Activated CD4-positive, alpha-beta memory T cell treated with anti-CD3 and anti-CD28 coated beads for 36 hours (primary cell): ENCODE measurements at regions of chr1 and their contacts with region 1.

Region 1: DNA sequence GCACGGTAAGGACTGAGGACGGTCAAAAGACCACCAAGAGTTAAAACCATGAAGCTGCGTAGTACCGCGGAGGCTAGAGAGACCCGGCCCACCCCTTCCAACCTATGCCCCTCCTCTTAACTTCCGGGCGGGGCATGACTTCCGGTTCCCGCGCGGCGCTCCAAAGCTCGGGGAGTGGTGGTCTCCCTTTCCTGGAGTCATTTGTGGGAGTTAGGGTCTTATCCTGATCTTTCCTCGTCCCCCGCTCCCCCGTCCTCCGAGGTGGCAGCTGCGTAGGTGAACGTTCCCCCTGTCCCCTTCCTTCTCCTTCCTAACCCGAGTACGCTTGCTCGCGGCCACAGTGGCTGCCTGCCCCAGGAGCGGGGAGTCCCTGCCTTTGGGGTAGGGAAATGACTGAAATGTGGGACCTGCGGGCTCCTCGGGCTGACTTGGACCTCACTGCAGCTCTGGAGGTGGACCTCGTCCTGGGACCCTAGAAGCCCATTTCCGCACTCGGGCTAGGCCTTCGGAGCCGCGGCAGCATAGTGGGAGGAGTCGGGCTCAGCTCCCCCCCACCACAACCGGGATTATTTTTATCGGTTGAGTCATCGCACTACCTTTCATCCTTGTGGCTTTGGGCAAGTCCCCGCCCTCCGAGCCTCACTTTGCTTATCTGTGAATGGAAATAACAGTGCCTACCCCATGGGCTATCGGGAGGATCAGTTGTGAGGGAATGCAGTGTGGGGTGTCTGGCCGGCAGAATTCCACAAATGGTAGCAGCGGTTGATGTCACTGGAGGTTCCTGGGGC is 24.1 kb downstream of the CELA3A start:
- DNase-seq: peak; percentile 92
- H3K4me3 Mint-ChIP-seq: peak overlapping the region; percentile 95
- H3K27ac Mint-ChIP-seq: peak overlapping the region; percentile 99
- H3K4me1 Mint-ChIP-seq: peaks cover 43% of the 10 kb centered on the region
- H3K27me3 Mint-ChIP-seq: no peaks in the 10 kb centered on the region

Region 2: DNA sequence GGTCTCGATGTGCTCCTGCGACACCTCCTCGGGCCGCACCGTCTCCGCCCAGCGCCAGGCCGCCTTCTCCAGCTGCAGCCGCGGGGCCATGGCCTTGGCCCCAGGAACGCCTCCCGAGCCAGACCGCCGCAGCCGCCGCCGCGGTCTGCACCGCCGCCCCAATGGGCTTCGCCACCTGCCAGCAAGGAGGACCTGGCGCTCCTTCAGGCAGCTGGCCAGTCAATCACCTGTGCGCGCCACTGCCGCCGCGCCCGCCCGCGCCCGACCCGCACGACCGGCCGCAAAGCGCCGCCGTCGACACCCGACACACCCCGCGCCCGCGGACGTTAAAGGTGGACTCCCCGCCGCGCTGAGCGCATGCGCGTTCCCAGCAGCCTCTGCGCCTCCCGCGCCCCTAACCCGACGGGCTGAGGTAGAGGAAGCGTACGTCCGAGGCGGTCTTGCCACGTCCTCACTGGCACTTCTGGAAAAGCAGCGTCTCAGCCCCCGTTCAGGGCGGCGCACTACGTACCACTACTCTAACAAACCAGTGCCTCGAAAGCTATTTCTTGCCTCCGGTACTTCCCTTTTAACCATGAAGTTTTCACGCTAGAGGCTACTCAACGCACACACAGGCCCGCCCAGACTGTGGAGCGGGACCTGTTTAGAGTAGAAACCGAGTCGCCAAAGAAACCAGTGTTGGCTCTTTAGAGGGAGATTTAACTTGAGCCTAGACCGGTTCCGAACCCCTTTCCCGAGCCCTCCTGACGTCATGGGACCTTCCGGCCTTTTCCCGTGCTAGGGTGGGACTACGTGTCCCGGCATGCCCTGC is 242.5 kb before region 1 on chr1 and contains the start of gene USP48:
- CTCF ChIA-PET with region 1: interaction called, 8 read pairs
- POLR2A ChIA-PET with region 1: interaction called, 23 read pairs
- intact Hi-C with region 1: loop called (anchors 1 kb)
- DNase-seq: peak; percentile 98
- H3K4me3 Mint-ChIP-seq: peak within 1 kb of the TSS; percentile 94
- H3K27ac Mint-ChIP-seq: peak within 1 kb of the TSS; percentile 97
- H3K4me1 Mint-ChIP-seq: peaks cover 21% of the 10 kb centered on the region
- H3K27me3 Mint-ChIP-seq: no peaks in the 10 kb centered on the region
- total RNA-seq, gene USP48: 77.2 to 91.1 TPM

Region 3: DNA sequence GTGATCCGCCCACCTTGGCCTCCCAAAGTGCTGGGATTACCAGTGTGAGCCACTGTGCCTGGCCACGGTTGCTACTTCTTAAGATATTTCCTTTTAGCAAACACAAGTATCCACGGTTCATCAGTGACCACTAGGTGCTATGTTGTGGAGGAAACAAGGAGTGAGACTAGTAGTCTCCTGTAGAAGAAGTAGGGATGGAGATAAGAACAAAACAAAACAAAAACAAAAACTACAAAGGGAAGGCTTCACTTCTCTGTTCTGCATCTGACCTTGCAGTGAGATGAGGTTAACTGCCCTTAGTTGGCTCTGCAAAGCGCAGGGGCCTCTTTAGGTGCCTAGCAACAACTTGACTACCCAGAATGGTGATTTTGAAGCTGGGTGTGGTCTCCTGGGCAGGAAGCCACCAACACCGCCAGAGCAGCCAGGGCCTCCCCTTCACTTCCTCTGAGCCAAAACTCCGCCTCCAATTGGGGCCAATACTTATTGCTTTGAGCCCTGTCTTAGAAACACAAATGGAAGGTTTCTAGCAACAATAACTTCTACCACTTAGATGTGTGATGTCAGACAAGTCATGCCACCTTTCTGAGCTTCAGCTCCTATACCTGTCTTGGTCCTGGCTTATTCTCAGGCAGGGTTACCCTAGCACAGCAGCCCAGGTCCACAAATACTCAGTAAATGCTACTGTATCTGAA is 14.2 kb after region 1 on chr1:
- CTCF ChIA-PET with region 1: interaction called, 36 read pairs
- POLR2A ChIA-PET with region 1: interaction called, 63 read pairs
- intact Hi-C with region 1: loop called (anchors 1 kb)
- DNase-seq: peak; percentile 95
- H3K4me3 Mint-ChIP-seq: peak overlapping the region; percentile 69
- H3K27ac Mint-ChIP-seq: peak overlapping the region; percentile 97
- H3K4me1 Mint-ChIP-seq: peaks cover 53% of the 10 kb centered on the region
- H3K27me3 Mint-ChIP-seq: no peaks in the 10 kb centered on the region

Region 4: DNA sequence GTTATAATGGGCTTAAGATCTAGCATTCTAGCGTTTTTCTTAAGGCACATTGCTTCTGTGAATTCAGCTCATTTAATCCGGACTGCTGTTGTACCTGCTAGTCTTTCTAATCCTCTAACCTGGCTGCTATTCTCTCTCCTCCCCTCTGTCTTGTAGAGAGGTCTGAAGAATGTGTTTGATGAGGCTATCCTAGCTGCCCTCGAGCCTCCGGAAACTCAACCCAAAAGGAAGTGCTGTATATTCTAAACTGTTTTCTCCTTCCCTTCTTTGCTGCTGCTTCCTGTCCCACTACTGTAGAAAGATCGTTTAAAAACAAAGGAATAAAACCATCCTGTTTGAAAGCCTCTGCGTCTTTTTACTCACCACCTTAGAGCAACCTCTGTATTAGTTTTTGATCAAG is 64.2 kb after region 1 on chr1:
- CTCF ChIA-PET with region 1: no interaction called
- POLR2A ChIA-PET with region 1: interaction called, 3 read pairs
- intact Hi-C with region 1: loop called (anchors 1 kb)
- DNase-seq: no peak
- H3K4me3 Mint-ChIP-seq: peak overlapping the region; percentile 36
- H3K27ac Mint-ChIP-seq: peak overlapping the region; percentile 87
- H3K4me1 Mint-ChIP-seq: peaks cover 88% of the 10 kb centered on the region
- H3K27me3 Mint-ChIP-seq: no peaks in the 10 kb centered on the region

Region 5: GRCh38 chr1:22105611-22106207 is 80.1 kb after region 1 on chr1:
- CTCF ChIA-PET with region 1: interaction called, 7 read pairs
- POLR2A ChIA-PET with region 1: no interaction called
- intact Hi-C with region 1: loop called (anchors 1 kb)
- DNase-seq: peak; percentile 29
- H3K4me3 Mint-ChIP-seq: no peak overlapping the region
- H3K27ac Mint-ChIP-seq: peak overlapping the region; percentile 72
- H3K4me1 Mint-ChIP-seq: peaks cover 50% of the 10 kb centered on the region
- H3K27me3 Mint-ChIP-seq: no peaks in the 10 kb centered on the region

Region 6: GRCh38 chr1:22451702-22452474 is 426.3 kb after region 1 on chr1 and contains the start of gene ZBTB40:
- CTCF ChIA-PET with region 1: no interaction called
- POLR2A ChIA-PET with region 1: no interaction called
- intact Hi-C with region 1: loop called (anchors 1 kb)
- DNase-seq: peak; percentile 97
- H3K4me3 Mint-ChIP-seq: peak within 1 kb of the TSS; percentile 89
- H3K27ac Mint-ChIP-seq: peak within 1 kb of the TSS; percentile 81
- H3K4me1 Mint-ChIP-seq: peaks cover 27% of the 10 kb centered on the region
- H3K27me3 Mint-ChIP-seq: no peaks in the 10 kb centered on the region
- total RNA-seq, gene ZBTB40: 11.8 to 12.9 TPM